PC-9 (cell line): ENCODE measurements at regions of chr11 and their contacts with region 1.

Region 1: GRCh38 chr11:26649884-26650283 is 72.0 kb downstream of the SLC5A12 start:
- DNase-seq: peak; percentile 42 to 56
- H3K4me3 ChIP-seq: no peak overlapping the region
- H3K27ac ChIP-seq: no peak overlapping the region
- H3K4me1 ChIP-seq: no peaks in the 10 kb centered on the region
- H3K27me3 ChIP-seq: no peaks in the 10 kb centered on the region
- CTCF ChIP-seq: peak; percentile 89

Region 2: GRCh38 chr11:26297189-26297975 is 352.5 kb before region 1 on chr11:
- CTCF ChIA-PET with region 1: no interaction called
- POLR2A ChIA-PET with region 1: no interaction called
- intact Hi-C with region 1: loop called (anchors 1 kb)
- DNase-seq: peak; percentile 7 to 63
- H3K4me3 ChIP-seq: no peak overlapping the region
- H3K27ac ChIP-seq: no peak overlapping the region
- H3K4me1 ChIP-seq: no peaks in the 10 kb centered on the region
- H3K27me3 ChIP-seq: no peaks in the 10 kb centered on the region
- CTCF ChIP-seq: peak; percentile 84

Region 3: GRCh38 chr11:26522912-26523610 is 126.8 kb before region 1 on chr11:
- CTCF ChIA-PET with region 1: no interaction called
- POLR2A ChIA-PET with region 1: no interaction called
- intact Hi-C with region 1: loop called (anchors 1 kb)
- DNase-seq: no peak
- H3K4me3 ChIP-seq: no peak overlapping the region
- H3K27ac ChIP-seq: no peak overlapping the region
- H3K4me1 ChIP-seq: no peaks in the 10 kb centered on the region
- H3K27me3 ChIP-seq: no peaks in the 10 kb centered on the region
- CTCF ChIP-seq: peak; percentile 50; the same call in 1 of the 2 replicates

Region 4: DNA sequence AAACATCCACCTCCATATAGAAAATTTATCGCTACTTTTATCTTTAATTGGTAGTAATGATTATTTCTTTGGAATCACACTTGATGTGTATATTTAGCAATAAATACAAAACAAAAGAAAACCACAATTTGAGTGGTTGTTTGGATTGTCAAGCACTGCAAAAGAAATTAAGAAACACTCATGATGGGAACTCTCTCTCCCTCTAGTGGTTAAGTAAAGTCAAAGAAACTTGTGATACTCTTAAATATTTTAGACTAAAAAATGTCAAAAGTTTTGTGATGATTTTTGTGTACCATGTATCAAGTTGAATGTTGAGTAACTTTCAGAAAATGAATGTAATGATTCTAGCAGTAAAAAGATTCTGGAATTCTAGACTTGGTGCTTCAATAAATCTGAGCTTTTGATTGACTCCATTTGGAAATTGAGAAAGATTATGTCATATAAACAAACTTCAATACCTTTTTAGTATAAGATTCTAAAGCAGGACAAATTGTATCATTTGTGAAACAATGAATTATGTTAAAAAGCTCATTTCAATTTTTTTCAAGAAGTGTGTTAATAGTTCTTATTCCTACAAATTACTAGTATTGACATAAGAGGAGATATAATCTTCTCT is 98.6 kb before region 1 on chr11:
- CTCF ChIA-PET with region 1: no interaction called
- POLR2A ChIA-PET with region 1: no interaction called
- intact Hi-C with region 1: loop called (anchors 2 kb)
- DNase-seq: no peak
- H3K4me3 ChIP-seq: no peak overlapping the region
- H3K27ac ChIP-seq: no peak overlapping the region
- H3K4me1 ChIP-seq: peaks cover 4% of the 10 kb centered on the region
- H3K27me3 ChIP-seq: no peaks in the 10 kb centered on the region
- CTCF ChIP-seq: peak; percentile 58

Region 5: DNA sequence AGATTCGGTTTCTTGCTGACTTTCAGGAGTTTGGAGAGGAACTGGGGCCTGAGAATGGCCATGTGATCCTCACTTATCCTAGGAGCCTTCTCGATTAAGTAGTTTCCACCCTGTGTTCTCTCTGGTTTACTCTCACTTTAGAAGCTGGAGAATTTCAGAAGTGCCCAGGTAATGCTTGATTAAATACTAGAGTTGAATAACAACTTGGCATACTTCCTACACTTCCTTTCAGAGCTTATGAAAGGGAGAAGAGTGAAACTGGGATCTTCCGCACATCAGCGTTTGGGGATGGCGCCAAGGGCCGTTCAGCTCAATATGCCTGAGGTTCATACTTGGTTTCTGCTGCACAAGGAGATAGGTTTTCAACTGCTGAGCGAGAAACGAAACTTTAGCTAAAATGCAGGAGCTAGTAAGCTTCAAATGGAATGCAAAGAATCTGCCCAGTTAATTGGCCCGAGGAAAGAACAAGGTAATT is 77.1 kb before region 1 on chr11:
- CTCF ChIA-PET with region 1: no interaction called
- POLR2A ChIA-PET with region 1: no interaction called
- intact Hi-C with region 1: loop called (anchors 5 kb)
- DNase-seq: peak in 1 of 2 experiments; percentile 11
- H3K4me3 ChIP-seq: no peak overlapping the region
- H3K27ac ChIP-seq: no peak overlapping the region
- H3K4me1 ChIP-seq: peaks cover 14% of the 10 kb centered on the region
- H3K27me3 ChIP-seq: no peaks in the 10 kb centered on the region
- CTCF ChIP-seq: no peak

Region 6: DNA sequence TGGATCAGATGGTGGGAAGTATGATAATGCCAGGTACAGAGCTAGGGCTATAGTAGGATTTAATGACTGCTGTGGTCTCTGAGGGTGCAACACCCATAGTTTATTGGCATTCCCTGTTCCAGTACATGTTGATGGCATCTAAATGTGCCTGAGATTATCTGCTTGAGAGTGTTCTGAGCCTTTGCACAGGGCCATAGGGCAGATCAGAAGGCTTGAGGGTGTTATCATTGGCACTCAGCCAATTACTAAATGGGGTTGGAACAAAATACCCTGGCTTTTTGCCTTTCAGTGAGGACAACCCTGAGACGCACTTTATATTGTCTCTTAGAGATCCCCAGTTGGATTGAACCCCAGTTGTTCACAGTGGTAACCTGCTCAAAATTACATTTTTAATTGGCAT is 65.2 kb after region 1 on chr11:
- CTCF ChIA-PET with region 1: no interaction called
- POLR2A ChIA-PET with region 1: no interaction called
- intact Hi-C with region 1: no loop called
- DNase-seq: no peak
- H3K4me3 ChIP-seq: no peak overlapping the region
- H3K27ac ChIP-seq: no peak overlapping the region
- H3K4me1 ChIP-seq: no peaks in the 10 kb centered on the region
- H3K27me3 ChIP-seq: no peaks in the 10 kb centered on the region
- CTCF ChIP-seq: no peak